GM23248 (cell line): ENCODE measurements at regions of chr9 and their contacts with region 1.

Region 1: DNA sequence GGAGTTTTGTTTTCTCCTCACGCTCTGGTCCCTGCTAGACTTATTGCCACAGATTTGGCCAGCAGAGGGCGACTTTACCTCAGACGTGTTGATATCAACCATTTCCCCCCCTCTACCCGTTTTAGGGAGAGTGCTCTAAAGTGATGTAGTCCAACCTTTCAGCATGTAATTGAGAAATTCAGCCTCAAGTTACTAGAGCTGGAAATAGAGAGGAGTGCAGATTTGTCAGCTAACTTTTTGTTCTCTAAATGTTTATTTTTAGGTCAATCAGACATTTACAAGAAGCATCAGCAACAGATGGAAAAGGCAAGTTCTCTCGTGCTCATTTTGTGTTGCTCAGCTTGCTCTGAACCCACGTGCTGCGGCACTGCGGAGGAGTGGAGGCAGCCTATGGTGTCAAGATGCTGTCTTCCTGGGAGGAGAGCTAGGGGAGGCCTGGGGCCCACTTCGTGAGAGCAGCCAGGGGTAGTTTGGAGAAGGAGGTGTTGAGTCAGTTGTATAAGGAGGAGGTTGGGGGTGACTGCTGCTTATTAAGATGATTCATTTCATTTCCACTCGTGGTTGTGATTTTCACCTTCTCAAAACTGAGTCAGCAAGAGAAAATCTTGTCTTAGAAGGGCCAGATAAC is 53.6 kb downstream of the GPR107 start:
- DNase-seq: peak; percentile 89
- H3K4me3 ChIP-seq: no peak overlapping the region
- H3K27ac ChIP-seq: peak overlapping the region; percentile 76
- H3K4me1 ChIP-seq: peaks cover 17% of the 10 kb centered on the region
- H3K27me3 ChIP-seq: no peaks in the 10 kb centered on the region

Region 2: DNA sequence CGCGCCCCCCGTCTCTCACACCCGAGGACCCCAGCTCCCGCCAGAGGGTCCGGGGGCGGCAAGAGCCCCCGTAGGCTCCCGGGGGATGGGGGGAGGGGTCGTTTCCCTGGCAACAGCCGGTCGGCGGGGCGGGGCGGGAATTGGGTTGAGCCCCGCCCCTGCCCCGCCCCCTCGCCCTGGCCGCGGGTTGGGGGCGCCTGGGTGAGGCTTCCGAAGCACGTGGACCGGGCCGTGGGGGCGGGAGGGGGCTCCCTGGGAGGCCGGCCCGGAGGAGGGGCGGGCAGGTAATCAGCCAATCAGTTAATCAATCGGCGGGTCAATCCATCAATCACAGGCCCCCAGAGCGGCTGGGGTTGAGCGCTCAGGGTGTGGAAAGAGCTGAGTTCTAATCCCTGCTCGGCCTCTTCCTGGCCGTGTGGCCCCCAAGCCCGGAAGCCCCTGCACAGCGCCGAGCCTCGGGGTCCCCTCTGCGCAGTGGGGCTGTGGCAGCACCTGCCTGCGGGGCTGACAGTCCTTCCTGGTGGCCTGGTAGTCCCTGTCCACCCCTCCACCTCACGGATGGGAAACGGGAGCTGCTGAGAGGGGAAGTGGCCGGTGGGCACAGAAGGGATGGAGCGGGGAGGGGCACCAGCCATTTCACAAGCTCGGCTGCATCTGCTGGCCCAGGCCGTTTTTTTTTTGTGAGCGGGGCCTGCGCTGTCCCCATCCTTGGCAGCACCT is 755.0 kb before region 1 on chr9:
- in situ Hi-C with region 1: no loop called
- DNase-seq: no peak
- H3K4me3 ChIP-seq: peak overlapping the region; percentile 69
- H3K27ac ChIP-seq: no peak overlapping the region
- H3K4me1 ChIP-seq: peaks cover 10% of the 10 kb centered on the region; the same call in 1 of the 2 replicates
- H3K27me3 ChIP-seq: no peaks in the 10 kb centered on the region

Region 3: DNA sequence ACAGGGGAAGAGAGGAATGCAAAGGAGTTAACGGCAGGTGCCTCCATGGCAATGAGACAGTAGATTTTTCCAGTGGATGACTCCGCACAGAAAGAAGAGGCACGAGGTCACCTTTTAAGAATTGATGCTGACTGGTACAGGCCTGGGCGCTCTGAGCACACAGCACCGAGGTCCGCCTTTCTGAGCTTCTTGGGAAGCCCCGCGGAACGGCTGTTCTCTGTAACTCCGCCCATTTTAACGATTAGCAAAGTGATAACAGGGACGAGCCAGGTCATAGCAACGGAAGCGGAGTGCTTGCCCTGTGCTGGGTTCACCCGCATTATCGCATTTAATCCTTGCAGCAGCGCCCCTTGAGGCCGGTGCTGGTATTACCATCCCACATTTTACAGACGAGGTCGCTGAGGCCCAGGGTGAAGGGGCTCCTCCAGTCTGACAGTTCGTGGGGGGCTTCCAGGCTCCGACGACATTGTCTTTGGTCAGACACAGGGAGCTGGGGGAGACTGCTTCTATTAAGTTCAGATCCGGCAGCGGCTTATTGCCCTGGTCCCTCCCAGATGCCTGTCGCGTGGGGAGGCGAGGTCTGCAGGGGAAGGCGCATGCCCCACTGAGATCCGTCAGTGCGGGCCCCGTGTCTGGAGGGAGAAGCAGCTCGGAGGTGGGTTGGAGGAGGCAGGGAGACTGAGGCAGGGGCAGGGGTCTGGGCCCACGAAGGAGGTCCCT is 135.8 kb after region 1 on chr9:
- in situ Hi-C with region 1: loop called (anchors 5 kb)
- DNase-seq: peak; percentile 53
- H3K4me3 ChIP-seq: peak overlapping the region; percentile 34; the same call in 1 of the 2 replicates
- H3K27ac ChIP-seq: no peak overlapping the region
- H3K4me1 ChIP-seq: no peaks in the 10 kb centered on the region
- H3K27me3 ChIP-seq: no peaks in the 10 kb centered on the region

Region 4: DNA sequence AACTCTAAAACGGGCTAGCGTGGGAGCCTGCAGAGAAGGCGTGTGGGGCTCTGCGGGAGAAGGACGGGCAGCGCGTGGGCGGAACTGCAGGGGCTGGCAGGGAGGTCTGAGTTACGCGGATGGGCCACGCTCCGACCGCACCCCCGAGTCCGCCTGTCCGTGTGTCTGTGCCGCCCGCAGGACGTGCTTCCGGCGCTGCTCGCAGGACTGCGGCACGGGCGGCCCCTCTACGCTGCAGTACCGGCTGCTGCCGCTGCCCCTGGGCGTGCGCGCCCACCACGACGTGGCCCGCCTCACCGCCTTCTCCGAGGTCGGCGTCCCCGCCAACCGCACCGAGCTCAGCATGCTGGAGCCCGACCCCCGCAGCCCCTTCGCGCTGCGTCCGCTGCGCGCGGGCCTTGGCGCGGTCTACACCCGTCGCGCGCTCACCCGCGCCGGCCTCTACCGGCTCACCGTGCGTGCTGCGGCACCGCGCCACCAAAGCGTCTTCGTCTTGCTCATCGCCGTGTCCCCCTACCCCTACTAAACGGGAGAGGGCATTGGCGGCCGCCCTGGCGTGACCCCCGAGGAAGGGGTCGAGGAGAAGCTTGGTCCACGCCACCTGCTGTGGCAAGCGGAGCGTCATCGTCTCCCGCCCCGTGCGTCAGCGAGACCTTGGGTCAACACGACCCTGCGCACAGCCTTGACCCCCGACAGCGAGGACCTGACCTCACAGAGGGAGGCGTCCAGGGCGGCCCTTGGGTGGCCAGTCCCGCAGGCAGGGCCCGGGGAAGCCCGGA is 326.0 kb after region 1 on chr9:
- in situ Hi-C with region 1: no loop called
- DNase-seq: peak; percentile 82
- H3K4me3 ChIP-seq: peak overlapping the region; percentile 61
- H3K27ac ChIP-seq: no peak overlapping the region
- H3K4me1 ChIP-seq: no peaks in the 10 kb centered on the region
- H3K27me3 ChIP-seq: no peaks in the 10 kb centered on the region

Region 5: GRCh38 chr9:130693426-130694191 is 586.3 kb after region 1 on chr9 and contains the start of gene EXOSC2:
- in situ Hi-C with region 1: loop called (anchors 25 kb)
- DNase-seq: peak; percentile 99
- H3K4me3 ChIP-seq: peak within 1 kb of the TSS; percentile 86
- H3K27ac ChIP-seq: peak within 1 kb of the TSS; percentile 67
- H3K4me1 ChIP-seq: peaks cover 20% of the 10 kb centered on the region
- H3K27me3 ChIP-seq: no peaks in the 10 kb centered on the region
- total RNA-seq, gene EXOSC2: 18.1 and 21.6 TPM in 2 replicates